GM12878 (cell line): ENCODE measurements at regions of chr3 and their contacts with region 1.

Region 1: GRCh38 chr3:119891944-119892721 is 110.2 kb downstream of the NR1I2 start:
- DNase-seq: peak; percentile 30
- ATAC-seq: peak; percentile 88
- H3K4me3 ChIP-seq: no peak overlapping the region
- H3K27ac ChIP-seq: no peak overlapping the region
- H3K4me1 ChIP-seq: no peaks in the 10 kb centered on the region
- H3K27me3 ChIP-seq: no peaks in the 10 kb centered on the region
- CTCF ChIP-seq: peak; percentile 57 to 70 (median 66)
- EP300 ChIP-seq: no peak
- POLR2A ChIP-seq: no peak
- RAD21 ChIP-seq: peak; percentile 97

Region 2: DNA sequence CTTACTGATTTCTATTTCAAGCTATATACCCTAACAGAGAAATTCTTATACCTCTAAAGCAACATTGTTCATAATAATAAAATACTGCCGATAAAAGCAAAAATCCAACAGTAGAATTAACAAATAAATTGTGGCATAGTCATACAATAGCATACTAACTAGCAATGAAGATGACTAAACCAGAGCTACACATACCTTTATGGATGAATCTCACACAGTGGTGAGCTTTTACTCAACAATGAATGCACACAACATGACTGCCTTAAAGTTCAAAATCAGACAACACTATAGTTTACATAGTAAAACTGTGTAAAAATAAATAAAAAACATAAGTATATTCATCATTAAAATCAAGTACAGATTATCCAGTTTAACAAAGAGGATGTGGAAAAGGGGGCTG is 11.2 kb before region 1 on chr3:
- CTCF ChIA-PET with region 1: interaction called, 17 read pairs
- POLR2A ChIA-PET with region 1: no interaction called
- RAD21 ChIA-PET with region 1: no interaction called
- SMC1A ChIA-PET with region 1: interaction called, 10 read pairs
- in situ Hi-C with region 1: no loop called
- intact Hi-C with region 1: no loop called
- DNase-seq: no peak
- ATAC-seq: no peak
- H3K4me3 ChIP-seq: no peak overlapping the region
- H3K27ac ChIP-seq: no peak overlapping the region
- H3K4me1 ChIP-seq: no peaks in the 10 kb centered on the region
- H3K27me3 ChIP-seq: no peaks in the 10 kb centered on the region
- CTCF ChIP-seq: no peak
- EP300 ChIP-seq: no peak
- POLR2A ChIP-seq: no peak
- RAD21 ChIP-seq: no peak

Region 3: GRCh38 chr3:120081719-120082118 is 189.6 kb after region 1 on chr3:
- CTCF ChIA-PET with region 1: interaction called, 15 read pairs
- POLR2A ChIA-PET with region 1: no interaction called
- RAD21 ChIA-PET with region 1: interaction called, 6 read pairs
- SMC1A ChIA-PET with region 1: interaction called, 5 read pairs
- in situ Hi-C with region 1: no loop called
- intact Hi-C with region 1: no loop called
- DNase-seq: no peak
- ATAC-seq: peak; percentile 60
- H3K4me3 ChIP-seq: no peak overlapping the region
- H3K27ac ChIP-seq: 0 out of 2 replicates have a peak overlapping the region, but pooled peaks have one; percentile 18
- H3K4me1 ChIP-seq: peaks cover 3% of the 10 kb centered on the region; the same call in 1 of the 2 replicates
- H3K27me3 ChIP-seq: no peaks in the 10 kb centered on the region
- CTCF ChIP-seq: no peak
- EP300 ChIP-seq: no peak
- POLR2A ChIP-seq: no peak
- RAD21 ChIP-seq: no peak

Region 4: DNA sequence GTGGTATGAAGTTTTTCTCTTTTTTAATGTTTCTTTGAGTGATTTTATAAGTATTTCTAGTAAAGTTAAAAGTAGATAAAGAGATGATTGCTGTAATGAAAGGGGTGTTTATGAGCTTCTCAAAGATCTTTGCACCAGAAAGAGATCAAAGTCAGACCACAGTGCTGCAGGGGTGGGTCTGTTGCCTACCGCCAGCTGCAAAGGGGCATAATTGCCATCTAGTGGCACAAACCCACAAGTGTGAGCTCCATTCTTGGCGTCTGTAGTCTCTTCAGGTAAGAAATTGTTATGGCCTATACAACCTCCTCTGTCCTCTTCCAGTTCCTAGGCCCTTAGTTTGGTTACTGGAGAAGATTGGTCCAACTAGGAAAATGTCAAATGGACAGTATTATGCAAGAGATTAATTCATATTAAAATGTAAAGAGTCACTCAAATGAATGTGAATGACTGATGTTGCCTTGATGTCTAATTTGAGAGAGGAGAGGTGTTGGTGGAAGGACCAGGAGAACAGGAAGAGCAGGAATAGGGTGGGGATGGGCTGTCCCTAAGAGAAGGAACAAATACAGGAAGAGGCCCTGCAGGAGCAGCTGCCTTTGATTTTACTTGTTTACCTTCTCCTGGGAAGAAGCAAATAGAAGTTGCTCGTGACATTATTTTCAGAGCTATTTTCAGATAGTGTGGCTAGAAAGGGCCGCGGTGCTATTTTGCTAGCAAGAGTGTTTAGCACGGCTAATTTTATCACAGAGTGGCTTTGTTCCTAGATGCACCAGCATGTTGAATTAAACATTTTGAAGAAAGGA is 255.1 kb after region 1 on chr3:
- CTCF ChIA-PET with region 1: interaction called, 66 read pairs
- POLR2A ChIA-PET with region 1: no interaction called
- RAD21 ChIA-PET with region 1: interaction called, 18 read pairs
- SMC1A ChIA-PET with region 1: interaction called, 81 read pairs
- in situ Hi-C with region 1: no loop called
- intact Hi-C with region 1: loop called (anchors 1 kb)
- DNase-seq: no peak
- ATAC-seq: peak; percentile 82
- H3K4me3 ChIP-seq: no peak overlapping the region
- H3K27ac ChIP-seq: no peak overlapping the region
- H3K4me1 ChIP-seq: peaks cover 10% of the 10 kb centered on the region
- H3K27me3 ChIP-seq: no peaks in the 10 kb centered on the region
- CTCF ChIP-seq: peak; percentile 37 to 42 (median 39); a peak in 5 of 6 replicates
- EP300 ChIP-seq: no peak
- POLR2A ChIP-seq: no peak
- RAD21 ChIP-seq: peak; percentile 73

Region 5: GRCh38 chr3:120182724-120183524 is 290.8 kb after region 1 on chr3:
- CTCF ChIA-PET with region 1: interaction called, 9 read pairs
- POLR2A ChIA-PET with region 1: no interaction called
- RAD21 ChIA-PET with region 1: interaction called, 6 read pairs
- SMC1A ChIA-PET with region 1: interaction called, 5 read pairs
- in situ Hi-C with region 1: no loop called
- intact Hi-C with region 1: loop called (anchors 1 kb)
- DNase-seq: no peak
- ATAC-seq: peak; percentile 56; the same call in 2 of the 3 replicates
- H3K4me3 ChIP-seq: no peak overlapping the region
- H3K27ac ChIP-seq: no peak overlapping the region
- H3K4me1 ChIP-seq: no peaks in the 10 kb centered on the region
- H3K27me3 ChIP-seq: no peaks in the 10 kb centered on the region; a peak in 1 of 4 replicates
- CTCF ChIP-seq: peak; percentile 14 to 40 (median 37); a peak in 5 of 6 replicates
- EP300 ChIP-seq: no peak
- POLR2A ChIP-seq: no peak
- RAD21 ChIP-seq: peak; percentile 76

Region 6: DNA sequence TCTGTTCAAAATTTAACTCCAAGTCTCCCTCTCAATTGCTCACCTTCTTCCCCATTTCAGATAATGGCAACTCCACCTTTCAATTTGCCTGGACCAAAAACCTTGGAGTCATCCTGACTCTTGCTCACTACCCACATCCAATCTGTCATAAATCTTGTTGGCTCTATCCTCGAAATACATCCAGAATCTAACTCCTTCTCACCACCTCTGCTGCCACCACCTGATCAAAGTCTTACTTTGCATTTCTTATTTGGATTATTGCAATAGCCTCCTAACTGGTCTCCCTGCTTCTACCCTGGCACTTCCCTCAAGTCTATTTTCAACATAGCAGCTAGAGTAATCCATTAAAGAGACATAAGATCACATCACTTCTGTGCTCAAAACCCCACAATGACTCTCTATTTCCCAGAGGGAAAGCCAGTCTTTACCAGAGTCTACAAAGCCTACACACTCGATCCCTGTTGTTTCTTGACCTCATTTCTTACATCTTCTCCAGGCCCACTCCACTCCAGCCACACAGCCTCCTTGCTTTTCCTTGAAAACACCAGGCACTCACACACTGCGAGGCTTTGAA is 306.3 kb after region 1 on chr3:
- CTCF ChIA-PET with region 1: interaction called, 9 read pairs
- POLR2A ChIA-PET with region 1: no interaction called
- RAD21 ChIA-PET with region 1: interaction called, 9 read pairs
- SMC1A ChIA-PET with region 1: interaction called, 10 read pairs
- in situ Hi-C with region 1: no loop called
- intact Hi-C with region 1: loop called (anchors 1 kb)
- DNase-seq: no peak
- ATAC-seq: peak; percentile 58
- H3K4me3 ChIP-seq: no peak overlapping the region
- H3K27ac ChIP-seq: no peak overlapping the region
- H3K4me1 ChIP-seq: no peaks in the 10 kb centered on the region
- H3K27me3 ChIP-seq: no peaks in the 10 kb centered on the region
- CTCF ChIP-seq: peak in 2 of 3 experiments; percentile 24 to 60; a peak in 3 of 6 replicates
- EP300 ChIP-seq: no peak
- POLR2A ChIP-seq: no peak
- RAD21 ChIP-seq: peak; percentile 60

Region 7: DNA sequence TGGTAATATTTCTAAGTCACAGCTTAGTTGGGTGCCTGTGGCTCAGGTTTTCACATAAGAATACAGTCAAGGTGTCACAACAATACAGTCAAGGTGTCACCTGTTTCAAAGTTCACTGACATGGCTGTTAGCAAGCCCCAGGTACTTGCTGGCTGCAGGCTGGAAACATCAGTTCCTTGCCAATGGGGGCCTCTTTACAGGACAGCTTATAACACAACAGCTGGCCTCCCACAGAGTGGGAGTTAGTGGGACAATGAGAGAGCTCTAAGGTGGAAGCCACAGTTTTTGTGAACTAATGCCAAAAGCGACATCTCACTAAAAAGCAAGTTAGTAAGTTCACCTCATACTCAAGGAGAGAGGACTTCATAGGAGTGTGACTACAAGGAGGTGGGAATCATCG is 347.5 kb after region 1 on chr3:
- CTCF ChIA-PET with region 1: interaction called, 9 read pairs
- POLR2A ChIA-PET with region 1: no interaction called
- RAD21 ChIA-PET with region 1: interaction called, 3 read pairs
- SMC1A ChIA-PET with region 1: interaction called, 4 read pairs
- in situ Hi-C with region 1: no loop called
- intact Hi-C with region 1: loop called (anchors 5 kb)
- DNase-seq: no peak
- ATAC-seq: no peak
- H3K4me3 ChIP-seq: no peak overlapping the region
- H3K27ac ChIP-seq: no peak overlapping the region
- H3K4me1 ChIP-seq: no peaks in the 10 kb centered on the region
- H3K27me3 ChIP-seq: no peaks in the 10 kb centered on the region
- CTCF ChIP-seq: no peak
- EP300 ChIP-seq: no peak
- POLR2A ChIP-seq: no peak
- RAD21 ChIP-seq: no peak